ENCODE measurements at regions of chr17 and their contacts with region 1.

Region 1: GRCh38 chr17:18038861-18039534 is at the starts of genes ATPAF2 and GID4:
- DNase-seq: peak; percentile 100
- H3K4me3 Mint-ChIP-seq: peak within 1 kb of the TSS; percentile 93
- H3K27ac Mint-ChIP-seq: peak within 1 kb of the TSS; percentile 92
- H3K4me1 Mint-ChIP-seq: peaks cover 39% of the 10 kb centered on the region
- H3K27me3 Mint-ChIP-seq: no peaks in the 10 kb centered on the region
- total RNA-seq, gene ATPAF2: 31.9 and 33.1 TPM in 2 replicates
- total RNA-seq, gene GID4: 9.6 and 11.3 TPM in 2 replicates

Region 2: GRCh38 chr17:17681187-17681848 is 357.7 kb before region 1 on chr17 and contains the start of gene RAI1:
- intact Hi-C with region 1: loop called (anchors 1 kb)
- DNase-seq: peak; percentile 92
- H3K4me3 Mint-ChIP-seq: peak within 1 kb of the TSS; percentile 91
- H3K27ac Mint-ChIP-seq: peak within 1 kb of the TSS; percentile 90
- H3K4me1 Mint-ChIP-seq: peaks cover 25% of the 10 kb centered on the region
- H3K27me3 Mint-ChIP-seq: peaks cover 12% of the 10 kb centered on the region
- total RNA-seq, gene RAI1: 30.1 and 34.5 TPM in 2 replicates

Region 3: GRCh38 chr17:17823433-17824118 is 215.4 kb before region 1 on chr17:
- intact Hi-C with region 1: loop called (anchors 5 kb)
- DNase-seq: peak; percentile 95
- H3K4me3 Mint-ChIP-seq: peak overlapping the region; percentile 85
- H3K27ac Mint-ChIP-seq: peak overlapping the region; percentile 93
- H3K4me1 Mint-ChIP-seq: peaks cover 84% of the 10 kb centered on the region
- H3K27me3 Mint-ChIP-seq: no peaks in the 10 kb centered on the region

Region 4: DNA sequence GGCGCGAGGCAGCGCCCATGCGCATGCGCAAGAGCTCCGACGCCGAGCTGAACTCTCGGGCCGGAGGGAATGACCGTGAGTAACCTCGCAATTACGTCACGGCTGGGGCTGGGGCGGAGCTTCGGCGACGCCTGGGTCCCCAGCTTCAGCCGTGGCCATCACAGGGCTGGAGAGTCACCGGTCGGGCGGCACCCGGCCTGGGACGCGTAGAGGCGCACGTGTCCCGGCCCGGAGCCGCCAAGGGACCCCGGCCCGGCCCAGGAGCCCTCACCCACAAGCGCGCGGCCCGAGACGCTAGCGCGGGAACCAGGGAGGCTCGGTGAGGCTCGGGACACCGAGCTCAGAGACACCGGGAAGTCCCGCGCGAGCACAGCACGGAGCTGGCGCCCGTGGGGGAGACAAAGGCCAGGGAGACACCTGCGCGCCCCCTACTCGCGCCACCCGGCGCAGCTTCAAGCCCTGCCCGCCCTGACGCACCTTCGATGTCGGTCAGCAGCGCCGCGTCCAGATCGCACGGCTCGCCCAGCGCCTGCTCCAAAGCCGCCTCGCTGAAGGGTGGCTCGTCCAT is 202.7 kb before region 1 on chr17:
- intact Hi-C with region 1: no loop called
- DNase-seq: peak; percentile 99
- H3K4me3 Mint-ChIP-seq: peak overlapping the region; percentile 98
- H3K27ac Mint-ChIP-seq: peak overlapping the region; percentile 95
- H3K4me1 Mint-ChIP-seq: peaks cover 68% of the 10 kb centered on the region
- H3K27me3 Mint-ChIP-seq: no peaks in the 10 kb centered on the region

Region 5: GRCh38 chr17:17959520-17960361 is 79.3 kb before region 1 on chr17:
- intact Hi-C with region 1: loop called (anchors 5 kb)
- DNase-seq: peak; percentile 78
- H3K4me3 Mint-ChIP-seq: peak overlapping the region; percentile 84
- H3K27ac Mint-ChIP-seq: peak overlapping the region; percentile 99
- H3K4me1 Mint-ChIP-seq: peaks cover 52% of the 10 kb centered on the region
- H3K27me3 Mint-ChIP-seq: no peaks in the 10 kb centered on the region

Region 6: GRCh38 chr17:18087610-18088491 is 48.9 kb after region 1 on chr17 and contains the start of gene DRG2:
- intact Hi-C with region 1: loop called (anchors 5 kb)
- DNase-seq: peak; percentile 97
- H3K4me3 Mint-ChIP-seq: peak within 1 kb of the TSS; percentile 100
- H3K27ac Mint-ChIP-seq: peak within 1 kb of the TSS; percentile 99
- H3K4me1 Mint-ChIP-seq: peaks cover 26% of the 10 kb centered on the region
- H3K27me3 Mint-ChIP-seq: no peaks in the 10 kb centered on the region
- total RNA-seq, gene DRG2: 60.8 and 64.3 TPM in 2 replicates

Measured in activated CD4-positive, alpha-beta T cell treated with anti-CD3 and anti-CD28 coated beads, Interleukin-2, amount 10 ng/mL, durations not matched to agents 24 days and 14 days (primary cell).